PC-3 (cell line): ENCODE measurements at regions of chr3 and their contacts with region 1.

Region 1: DNA sequence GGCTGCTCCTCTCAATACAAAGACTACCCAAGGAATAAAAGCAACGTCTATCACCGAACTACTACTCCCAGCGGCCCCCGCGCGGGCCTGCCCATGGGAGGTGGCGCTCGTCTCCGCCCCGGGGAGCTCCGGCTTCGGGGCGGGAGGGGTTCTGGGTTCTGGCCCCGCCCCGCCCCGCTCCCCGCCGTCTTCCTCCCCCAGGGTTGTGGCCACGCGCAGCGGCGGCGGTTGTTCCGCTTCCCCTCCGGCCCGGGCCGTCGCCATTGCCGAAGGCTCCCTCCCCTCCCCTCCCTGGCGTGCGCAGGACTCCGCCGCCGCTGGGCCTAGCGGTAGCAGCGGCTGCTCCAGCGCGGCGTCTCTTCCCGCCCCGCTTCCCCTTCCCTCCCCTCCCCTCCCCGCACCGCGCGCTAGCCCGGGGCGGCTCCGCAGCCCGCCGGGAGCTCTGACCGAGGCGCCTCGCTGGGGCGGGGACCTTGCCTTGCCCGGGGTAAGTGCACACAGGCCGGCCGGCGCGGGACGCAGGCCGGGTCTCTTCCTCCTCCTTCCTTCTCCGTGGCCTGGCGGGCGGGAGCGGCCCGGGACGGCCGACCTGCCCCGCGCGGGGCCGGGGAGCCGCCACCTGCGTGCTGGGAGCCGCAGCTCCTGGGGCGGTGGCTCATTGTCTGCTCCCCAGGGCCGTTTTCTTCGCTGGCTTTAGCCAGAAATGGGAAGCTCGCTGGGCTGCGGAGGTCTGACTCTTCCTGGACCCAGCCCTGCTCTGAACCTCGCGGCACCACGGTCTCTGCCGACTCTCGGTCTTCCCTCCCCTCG is at the start of gene PAK2:
- DNase-seq: peak; percentile 91
- ATAC-seq: peak; percentile 86
- H3K4me3 ChIP-seq: peak within 1 kb of the TSS; percentile 99
- H3K27ac ChIP-seq: peak within 1 kb of the TSS; percentile 78
- H3K4me1 ChIP-seq: peaks cover 18% of the 10 kb centered on the region
- H3K27me3 ChIP-seq: no peaks in the 10 kb centered on the region
- CTCF ChIP-seq: no peak
- total RNA-seq, gene PAK2: 32.6 and 53.8 TPM in 2 replicates

Region 2: GRCh38 chr3:196023947-196024346 is 715.9 kb before region 1 on chr3:
- CTCF ChIA-PET with region 1: no interaction called
- POLR2A ChIA-PET with region 1: interaction called, 23 read pairs
- intact Hi-C with region 1: no loop called
- DNase-seq: peak; percentile 43
- ATAC-seq: peak; percentile 95
- H3K4me3 ChIP-seq: peak overlapping the region; percentile 52
- H3K27ac ChIP-seq: no peak overlapping the region
- H3K4me1 ChIP-seq: 0 out of 2 replicates have a peak, but pooled peaks cover 5% of the 10 kb centered on the region
- H3K27me3 ChIP-seq: no peaks in the 10 kb centered on the region
- CTCF ChIP-seq: no peak

Region 3: GRCh38 chr3:196711838-196712513 is 27.9 kb before region 1 on chr3 and contains the starts of genes CEP19 and PIGX:
- CTCF ChIA-PET with region 1: no interaction called
- POLR2A ChIA-PET with region 1: interaction called, 12 read pairs
- intact Hi-C with region 1: loop called (anchors 1 kb)
- DNase-seq: peak; percentile 88
- ATAC-seq: peak; percentile 83
- H3K4me3 ChIP-seq: peak within 1 kb of the TSS; percentile 95
- H3K27ac ChIP-seq: peak within 1 kb of the TSS; percentile 47
- H3K4me1 ChIP-seq: peaks cover 18% of the 10 kb centered on the region
- H3K27me3 ChIP-seq: no peaks in the 10 kb centered on the region
- CTCF ChIP-seq: no peak
- total RNA-seq, gene CEP19: 2.6 and 3.2 TPM in 2 replicates
- total RNA-seq, gene PIGX: 22.5 and 30.3 TPM in 2 replicates

Region 4: DNA sequence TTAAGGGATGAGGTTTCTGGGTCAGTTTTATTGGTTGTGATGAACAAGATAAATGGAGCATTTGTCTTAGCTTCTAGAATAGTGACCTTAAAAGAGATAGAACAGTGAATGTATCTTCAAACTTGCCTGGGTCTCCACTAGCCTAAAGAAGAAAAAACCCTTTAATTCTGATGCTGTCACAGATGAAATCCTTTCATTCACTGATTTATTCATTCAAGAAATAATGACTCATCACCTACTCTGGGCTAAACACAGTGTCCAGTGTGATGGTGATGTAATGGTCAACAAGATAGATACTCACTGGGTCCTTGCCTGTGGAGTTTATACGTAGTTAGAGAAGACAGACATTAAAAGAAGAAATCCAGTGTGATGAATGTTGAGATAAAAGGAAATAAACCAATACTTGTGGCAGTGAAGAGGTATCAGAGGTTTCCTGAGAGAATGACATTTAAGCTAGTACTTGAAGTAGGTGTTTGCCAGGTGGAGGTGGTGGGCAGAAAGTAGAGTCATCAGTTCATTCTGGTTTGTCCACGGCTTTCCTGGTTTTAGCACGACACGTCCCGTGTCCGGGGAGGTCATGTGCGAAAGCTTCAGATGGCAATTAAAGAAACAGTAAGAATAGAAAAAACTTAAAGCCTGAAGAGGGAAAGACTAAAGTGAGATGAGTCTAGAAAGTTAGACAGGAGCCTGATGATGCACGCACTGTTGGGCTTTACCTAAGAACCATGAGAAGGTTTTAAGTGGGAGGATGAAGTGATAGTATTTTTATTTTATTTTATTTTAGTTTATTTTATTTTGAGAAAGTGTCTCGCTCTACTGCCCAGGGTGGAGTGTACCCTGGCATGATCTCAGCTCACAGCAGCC is 18.2 kb after region 1 on chr3:
- CTCF ChIA-PET with region 1: no interaction called
- POLR2A ChIA-PET with region 1: no interaction called
- intact Hi-C with region 1: loop called (anchors 1 kb)
- DNase-seq: peak; percentile 50
- ATAC-seq: peak; percentile 88
- H3K4me3 ChIP-seq: no peak overlapping the region
- H3K27ac ChIP-seq: no peak overlapping the region
- H3K4me1 ChIP-seq: no peaks in the 10 kb centered on the region; the same call in 1 of the 2 replicates
- H3K27me3 ChIP-seq: no peaks in the 10 kb centered on the region
- CTCF ChIP-seq: no peak

Region 5: DNA sequence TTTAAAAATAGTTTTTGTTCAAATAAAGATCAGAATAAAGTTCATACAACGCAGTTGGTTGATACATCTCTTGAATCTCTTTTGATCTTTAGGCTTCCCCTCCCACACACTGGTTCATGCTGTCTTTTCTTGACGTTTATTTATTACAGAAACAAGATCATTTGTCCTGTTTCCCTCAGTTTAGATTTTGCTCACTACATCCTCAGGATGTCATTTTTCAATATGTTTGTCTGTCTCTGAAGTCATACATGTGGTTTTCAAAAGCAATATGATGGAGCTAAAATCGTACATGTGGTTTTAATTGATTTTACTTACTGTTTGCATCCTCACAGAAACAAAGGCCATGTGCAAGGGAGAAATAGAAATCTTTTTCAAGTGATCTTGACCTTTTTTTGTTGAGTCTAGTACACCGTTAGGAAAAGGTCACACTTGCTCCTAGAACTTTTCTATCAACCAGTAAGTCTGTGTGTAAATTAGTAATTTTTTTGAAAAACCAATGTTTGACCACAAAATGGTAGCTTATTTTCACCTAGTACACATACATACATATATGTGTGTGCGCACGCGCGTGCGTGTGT is 64.1 kb after region 1 on chr3:
- CTCF ChIA-PET with region 1: no interaction called
- POLR2A ChIA-PET with region 1: interaction called, 3 read pairs
- intact Hi-C with region 1: loop called (anchors 2 kb)
- DNase-seq: no peak
- ATAC-seq: no peak
- H3K4me3 ChIP-seq: no peak overlapping the region
- H3K27ac ChIP-seq: no peak overlapping the region
- H3K4me1 ChIP-seq: peaks cover 7% of the 10 kb centered on the region
- H3K27me3 ChIP-seq: no peaks in the 10 kb centered on the region
- CTCF ChIP-seq: no peak

Region 6: DNA sequence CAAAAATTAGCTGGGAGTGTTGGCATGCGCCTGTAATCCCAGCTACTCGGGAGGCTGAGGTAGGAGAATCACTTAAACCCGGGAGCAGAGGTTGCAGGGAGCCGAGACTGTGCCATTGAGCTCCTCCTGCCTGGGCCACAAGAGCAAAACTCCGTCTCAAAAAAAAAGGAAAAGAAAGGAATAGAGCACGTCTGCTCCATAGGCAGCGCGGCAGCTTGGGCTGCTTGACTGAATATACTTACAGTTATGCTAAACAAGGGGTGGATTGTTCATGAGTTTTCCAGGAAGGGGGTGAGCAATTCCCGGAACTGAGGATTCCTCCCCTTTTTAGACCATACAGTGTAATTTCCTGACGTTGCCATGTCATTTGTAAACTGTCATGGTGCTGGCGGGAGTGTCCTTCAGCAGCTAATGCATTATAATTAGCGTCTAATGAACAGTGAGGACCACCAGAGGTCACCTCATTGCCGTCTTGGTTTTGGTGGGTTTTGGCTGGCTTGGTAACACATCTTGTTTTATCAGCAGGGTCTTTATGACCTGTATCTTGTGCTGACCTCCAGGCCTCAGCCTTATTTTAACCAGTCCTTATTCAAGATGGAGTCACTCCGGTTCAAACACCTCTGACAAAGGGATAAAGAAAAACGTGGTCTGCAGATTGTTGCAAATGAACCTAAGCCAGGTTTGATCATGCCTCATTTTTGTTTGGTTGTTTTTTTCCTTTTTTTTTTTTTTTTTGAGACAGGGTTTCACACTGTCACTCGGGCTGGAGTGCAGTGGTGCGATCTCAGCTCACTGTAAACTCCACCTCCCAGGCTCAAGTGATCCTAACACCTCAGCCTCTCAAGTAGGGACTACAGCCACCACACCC is 102.9 kb after region 1 on chr3:
- CTCF ChIA-PET with region 1: no interaction called
- POLR2A ChIA-PET with region 1: no interaction called
- intact Hi-C with region 1: no loop called
- DNase-seq: no peak
- ATAC-seq: no peak
- H3K4me3 ChIP-seq: no peak overlapping the region
- H3K27ac ChIP-seq: no peak overlapping the region
- H3K4me1 ChIP-seq: no peaks in the 10 kb centered on the region
- H3K27me3 ChIP-seq: no peaks in the 10 kb centered on the region
- CTCF ChIP-seq: no peak

Region 7: DNA sequence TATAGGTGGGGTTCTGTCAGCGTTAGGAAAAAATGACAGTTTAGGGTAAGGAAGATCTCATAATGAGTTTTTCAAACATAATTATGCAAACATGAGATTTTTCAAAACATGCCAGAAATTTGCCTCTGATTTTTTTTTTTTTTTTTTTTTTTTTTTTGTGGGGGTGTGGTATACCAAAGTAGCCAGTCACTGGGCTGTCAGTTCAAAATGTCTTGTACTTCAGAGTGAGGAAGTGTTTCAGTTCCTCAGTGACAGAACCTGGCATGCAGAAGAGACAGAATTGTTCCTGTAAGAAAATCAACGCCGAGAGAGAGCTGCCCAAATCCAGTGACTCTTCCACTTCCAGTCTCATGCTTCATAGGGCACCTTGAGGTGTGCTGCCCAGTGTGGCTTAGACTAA is 192.7 kb after region 1 on chr3:
- CTCF ChIA-PET with region 1: no interaction called
- POLR2A ChIA-PET with region 1: no interaction called
- intact Hi-C with region 1: loop called (anchors 10 kb)
- DNase-seq: no peak
- ATAC-seq: no peak
- H3K4me3 ChIP-seq: no peak overlapping the region
- H3K27ac ChIP-seq: no peak overlapping the region
- H3K4me1 ChIP-seq: no peaks in the 10 kb centered on the region
- H3K27me3 ChIP-seq: no peaks in the 10 kb centered on the region
- CTCF ChIP-seq: no peak